HCT116 (cell line): ENCODE measurements at regions of chr12 and their contacts with region 1.

Region 1: DNA sequence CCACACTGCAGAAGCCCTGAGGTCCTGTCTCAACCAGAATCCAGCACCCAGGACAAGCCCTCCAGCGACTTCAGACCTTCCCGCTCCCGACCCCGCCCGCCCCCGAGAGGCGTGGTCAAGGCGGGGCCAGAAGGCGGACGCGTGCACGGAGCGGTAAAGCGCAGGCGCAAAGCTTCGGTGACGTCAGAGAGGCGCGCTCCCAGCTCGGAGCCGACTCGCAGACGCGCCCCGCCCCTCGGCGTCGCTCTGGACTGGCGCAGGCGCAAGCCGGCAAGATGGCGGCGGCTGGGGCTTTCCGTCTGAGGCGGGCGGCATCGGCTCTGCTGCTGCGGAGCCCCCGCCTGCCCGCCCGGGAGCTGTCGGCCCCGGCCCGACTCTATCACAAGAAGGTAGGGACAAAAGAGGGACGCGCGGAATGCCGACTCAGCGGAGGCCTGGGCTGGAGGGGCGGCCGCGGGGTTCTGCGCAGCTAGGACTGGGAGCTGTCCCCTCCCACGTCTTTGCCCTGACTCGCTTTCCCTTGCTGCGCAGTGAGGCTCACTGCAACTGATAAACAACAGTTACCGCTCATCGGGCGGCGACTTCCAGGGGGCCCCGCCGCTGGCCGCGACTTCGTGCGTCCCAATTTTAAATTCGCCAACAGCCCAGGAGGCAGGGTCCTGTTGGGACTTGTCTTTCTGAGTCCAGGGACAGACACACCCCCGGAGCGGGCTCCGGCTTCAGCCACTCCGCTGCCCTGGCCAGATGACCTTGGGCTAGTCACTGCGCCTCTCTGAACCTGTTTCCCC is at the start of gene ISCU:
- DNase-seq: peak; percentile 95
- ATAC-seq: peak; percentile 75
- H3K4me3 ChIP-seq: peak within 1 kb of the TSS; percentile 85 to 96
- H3K27ac ChIP-seq: peak within 1 kb of the TSS; percentile 76
- H3K4me1 ChIP-seq: peaks cover 30 to 49% of the 10 kb centered on the region in 2 experiments
- H3K27me3 ChIP-seq: no peaks in the 10 kb centered on the region
- CTCF ChIP-seq: no peak
- POLR2A ChIP-seq: peak; percentile 55
- RAD21 ChIP-seq: no peak
- total RNA-seq, gene ISCU: 89.6 TPM

Region 2: GRCh38 chr12:107317751-107318613 is 1244.6 kb before region 1 on chr12:
- CTCF ChIA-PET with region 1: no interaction called
- POLR2A ChIA-PET with region 1: no interaction called
- RAD21 ChIA-PET with region 1: no interaction called
- intact Hi-C with region 1: no loop called
- DNase-seq: peak; percentile 78
- ATAC-seq: peak; percentile 79
- H3K4me3 ChIP-seq: peak overlapping the region; percentile 65 to 66
- H3K27ac ChIP-seq: peak overlapping the region; percentile 45; the same call in 1 of the 2 replicates
- H3K4me1 ChIP-seq: peaks cover 10 to 36% of the 10 kb centered on the region in 2 experiments; a peak in 3 of 4 replicates
- H3K27me3 ChIP-seq: peaks cover 11% of the 10 kb centered on the region; the same call in 1 of the 2 replicates
- CTCF ChIP-seq: peak; percentile 37 to 64 (median 58); a peak in 4 of 6 replicates
- POLR2A ChIP-seq: no peak
- RAD21 ChIP-seq: peak; percentile 57

Region 3: GRCh38 chr12:108618079-108618952 is 55.8 kb after region 1 on chr12:
- CTCF ChIA-PET with region 1: interaction called, 13 read pairs
- POLR2A ChIA-PET with region 1: interaction called, 3 read pairs
- RAD21 ChIA-PET with region 1: no interaction called
- intact Hi-C with region 1: loop called (anchors 1 kb)
- DNase-seq: peak; percentile 64
- ATAC-seq: peak; percentile 96
- H3K4me3 ChIP-seq: no peak overlapping the region
- H3K27ac ChIP-seq: no peak overlapping the region
- H3K4me1 ChIP-seq: peaks cover 2 to 16% of the 10 kb centered on the region in 2 experiments
- H3K27me3 ChIP-seq: no peaks in the 10 kb centered on the region
- CTCF ChIP-seq: peak; percentile 95 to 99 (median 96)
- POLR2A ChIP-seq: no peak
- RAD21 ChIP-seq: peak; percentile 99

Region 4: DNA sequence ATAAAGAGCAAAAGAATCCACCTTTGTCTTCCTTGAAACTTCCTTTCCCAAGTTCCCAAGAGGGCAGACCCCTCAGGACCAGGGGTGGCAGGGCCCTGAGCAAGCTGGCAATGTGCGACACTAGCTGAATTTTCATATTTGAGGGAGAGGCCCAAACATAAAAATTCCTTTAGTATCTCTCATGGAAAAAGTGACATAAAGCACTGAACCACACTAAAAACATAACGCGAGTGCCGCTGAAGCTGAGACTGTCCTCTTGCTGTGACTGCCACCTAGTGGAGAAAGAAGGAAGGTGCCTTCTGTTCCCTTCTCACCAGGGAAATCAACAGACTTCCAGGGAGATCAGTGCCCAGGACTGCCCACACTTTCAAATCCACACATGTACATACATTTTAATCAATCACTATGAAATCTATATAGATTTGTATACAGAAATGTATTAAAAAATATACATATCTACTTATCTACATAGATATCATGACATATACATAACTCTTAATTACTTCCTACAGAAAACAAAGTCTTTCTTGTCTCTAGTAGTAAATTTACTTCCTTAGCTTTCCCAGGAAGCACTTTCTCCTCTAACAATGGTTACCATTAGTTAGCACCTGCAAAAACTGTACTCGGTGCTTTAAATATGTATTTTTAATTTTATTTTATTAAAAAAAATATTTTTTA is 241.0 kb after region 1 on chr12:
- CTCF ChIA-PET with region 1: interaction called, 6 read pairs
- POLR2A ChIA-PET with region 1: no interaction called
- RAD21 ChIA-PET with region 1: no interaction called
- intact Hi-C with region 1: loop called (anchors 1 kb)
- DNase-seq: peak; percentile 69
- ATAC-seq: peak; percentile 88
- H3K4me3 ChIP-seq: no peak overlapping the region
- H3K27ac ChIP-seq: peak overlapping the region; percentile 12; the same call in 1 of the 2 replicates
- H3K4me1 ChIP-seq: peaks cover 6 to 11% of the 10 kb centered on the region in 2 experiments; a peak in 3 of 4 replicates
- H3K27me3 ChIP-seq: no peaks in the 10 kb centered on the region
- CTCF ChIP-seq: peak; percentile 88 to 91 (median 88)
- POLR2A ChIP-seq: no peak
- RAD21 ChIP-seq: peak; percentile 95

Region 5: DNA sequence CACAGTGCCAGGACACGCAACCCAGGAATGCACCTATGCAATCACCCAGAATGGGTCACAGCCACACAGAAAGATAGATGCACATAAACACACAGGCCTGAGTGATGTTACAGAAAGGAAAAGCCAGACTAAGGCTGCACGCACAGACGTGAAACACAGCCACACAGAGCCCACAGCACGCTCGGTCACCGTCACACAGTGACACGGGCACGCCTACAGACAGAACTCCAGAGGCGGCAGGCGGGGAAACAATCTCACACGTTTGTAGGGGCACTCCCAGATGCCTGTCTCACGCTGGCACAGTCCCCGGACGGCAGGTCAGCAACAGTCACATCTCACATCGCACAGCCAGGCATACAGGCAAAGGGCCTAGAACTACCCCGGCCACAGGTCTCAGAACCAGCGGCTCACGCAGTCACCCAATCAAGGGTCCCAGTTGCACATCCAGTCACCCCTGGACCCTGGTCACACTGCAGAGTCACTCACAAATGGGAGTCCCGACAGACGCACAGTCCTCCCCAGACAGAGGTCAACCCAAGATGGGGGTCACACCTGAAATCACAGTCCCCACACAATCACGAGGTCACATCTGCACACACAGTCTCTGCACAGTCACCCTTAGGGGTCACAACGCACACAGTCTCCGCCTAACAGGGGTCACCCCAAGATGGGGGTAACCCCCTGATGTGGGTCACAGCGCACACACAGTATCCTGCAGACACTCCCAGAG is 294.1 kb after region 1 on chr12:
- CTCF ChIA-PET with region 1: no interaction called
- POLR2A ChIA-PET with region 1: no interaction called
- RAD21 ChIA-PET with region 1: no interaction called
- intact Hi-C with region 1: loop called (anchors 2 kb)
- DNase-seq: no peak
- ATAC-seq: peak; percentile 17
- H3K4me3 ChIP-seq: peak overlapping the region; percentile 86 to 99
- H3K27ac ChIP-seq: peak overlapping the region; percentile 92
- H3K4me1 ChIP-seq: peaks cover 50 to 73% of the 10 kb centered on the region in 2 experiments
- H3K27me3 ChIP-seq: no peaks in the 10 kb centered on the region
- CTCF ChIP-seq: no peak
- POLR2A ChIP-seq: no peak
- RAD21 ChIP-seq: no peak

Region 6: GRCh38 chr12:109093022-109093918 is 530.7 kb after region 1 on chr12 and contains the start of gene ALKBH2:
- CTCF ChIA-PET with region 1: interaction called, 3 read pairs
- POLR2A ChIA-PET with region 1: no interaction called
- RAD21 ChIA-PET with region 1: no interaction called
- intact Hi-C with region 1: loop called (anchors 2 kb)
- DNase-seq: peak; percentile 88
- ATAC-seq: peak; percentile 71
- H3K4me3 ChIP-seq: peak within 1 kb of the TSS; percentile 57 to 66
- H3K27ac ChIP-seq: peak within 1 kb of the TSS; percentile 40
- H3K4me1 ChIP-seq: peaks cover 13 to 34% of the 10 kb centered on the region in 2 experiments; a peak in 3 of 4 replicates
- H3K27me3 ChIP-seq: no peaks in the 10 kb centered on the region
- CTCF ChIP-seq: peak; percentile 86 to 96 (median 89)
- POLR2A ChIP-seq: peak; percentile 97
- RAD21 ChIP-seq: peak; percentile 99
- total RNA-seq, gene ALKBH2: 35.8 TPM